ENCODE measurements at regions of chr3 and their contacts with region 1.

Region 1: DNA sequence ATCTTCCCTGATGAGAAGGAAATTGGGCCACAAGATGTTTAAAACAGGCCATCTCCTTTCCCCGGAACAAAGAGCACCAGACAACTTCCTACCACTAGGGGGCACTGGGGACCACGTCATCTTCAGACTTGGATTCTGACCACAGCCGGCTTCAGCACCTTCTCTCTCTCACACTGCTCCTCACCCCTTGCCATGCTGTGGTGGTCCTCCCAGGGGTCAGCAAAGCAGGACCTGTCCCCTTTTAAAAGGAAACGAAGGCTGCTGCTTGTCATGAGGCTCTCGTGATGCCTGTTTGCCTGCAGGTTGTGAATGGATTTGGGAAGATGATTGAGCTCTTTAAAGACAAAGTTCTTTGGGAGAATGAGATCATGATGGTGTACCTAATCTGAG is 16.2 kb downstream of the RFT1 start:
- DNase-seq: peak; percentile 47 to 93
- H3K4me3 ChIP-seq: no peak overlapping the region
- H3K27ac ChIP-seq: no peak overlapping the region
- H3K4me1 ChIP-seq: no peaks in the 10 kb centered on the region
- H3K27me3 ChIP-seq: no peaks in the 10 kb centered on the region
- CTCF ChIP-seq: peak; percentile 90 to 95 (median 90)
- EP300 ChIP-seq: no peak
- POLR2A ChIP-seq: no peak
- RAD21 ChIP-seq: peak; percentile 93

Region 2: DNA sequence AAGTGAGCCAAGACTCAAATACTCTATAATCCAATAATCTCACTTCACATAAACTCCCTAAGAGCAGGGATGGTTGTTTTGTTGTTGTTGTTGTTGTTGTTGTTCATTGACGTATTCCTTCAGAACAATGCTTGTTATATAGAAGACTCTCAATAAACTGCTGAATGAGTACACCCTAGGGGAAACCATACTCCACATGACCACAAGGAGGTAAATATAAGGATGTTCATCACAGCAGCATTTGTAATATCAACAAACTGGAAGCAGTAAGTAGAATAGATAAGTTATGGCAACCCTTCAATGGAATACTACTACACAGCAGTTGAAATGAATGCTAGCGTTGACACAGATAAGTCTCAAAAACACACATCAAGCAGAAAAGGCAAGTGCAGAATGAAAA is 154.2 kb before region 1 on chr3:
- CTCF ChIA-PET with region 1: no interaction called
- POLR2A ChIA-PET with region 1: no interaction called
- DNase-seq: no peak
- H3K4me3 ChIP-seq: no peak overlapping the region
- H3K27ac ChIP-seq: no peak overlapping the region
- H3K4me1 ChIP-seq: no peaks in the 10 kb centered on the region
- H3K27me3 ChIP-seq: no peaks in the 10 kb centered on the region
- CTCF ChIP-seq: peak in 1 of 3 experiments; percentile 5; a peak in 1 of 4 replicates
- EP300 ChIP-seq: no peak
- POLR2A ChIP-seq: no peak
- RAD21 ChIP-seq: no peak

Region 3: DNA sequence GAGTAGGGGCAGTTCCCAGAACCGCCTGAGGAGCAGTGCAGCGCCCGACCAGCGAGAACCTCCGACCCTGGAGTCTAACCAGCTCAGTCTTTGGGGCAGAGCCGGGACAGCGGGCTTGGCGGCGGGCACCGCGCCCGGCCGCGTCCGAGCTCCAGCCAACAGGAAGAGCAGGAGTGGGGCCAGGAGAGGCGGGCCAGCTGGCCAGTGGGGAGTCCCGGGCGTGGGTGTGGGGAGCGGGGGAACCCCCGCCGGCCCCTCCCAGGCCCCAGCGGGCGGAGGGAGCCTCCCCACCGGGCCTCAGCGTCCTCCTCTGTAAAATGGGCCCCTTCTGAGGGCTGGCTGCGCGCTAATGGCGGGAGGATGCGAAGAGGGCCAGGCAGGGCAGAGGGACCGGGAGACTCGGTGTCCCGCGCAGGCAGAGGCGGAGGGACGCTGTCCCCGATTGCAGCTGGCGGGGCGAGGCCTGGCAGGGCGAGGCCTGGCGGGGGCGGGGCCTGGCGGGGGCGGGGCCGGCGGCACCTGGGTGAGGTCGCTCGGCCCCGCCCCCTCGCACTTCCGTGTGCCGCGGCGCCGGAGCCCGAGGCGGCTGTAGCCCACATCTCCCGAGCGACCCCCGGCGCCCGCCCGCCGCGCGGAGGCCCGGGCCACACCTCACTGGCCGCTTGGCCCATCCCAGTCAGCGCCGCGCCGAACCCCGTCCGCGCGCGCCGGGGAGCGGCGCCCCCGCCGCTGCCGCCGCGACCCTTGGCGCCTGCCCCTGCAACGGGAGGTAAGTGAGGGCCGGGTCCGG is 46.8 kb after region 1 on chr3 and contains the start of gene PRKCD:
- CTCF ChIA-PET with region 1: interaction called, 16 read pairs
- POLR2A ChIA-PET with region 1: no interaction called
- DNase-seq: peak in 1 of 2 experiments; percentile 84
- H3K4me3 ChIP-seq: peak within 1 kb of the TSS; percentile 85 to 94 (median 92)
- H3K27ac ChIP-seq: no peak within 1 kb of the TSS
- H3K4me1 ChIP-seq: peaks cover 3 to 35% (median 21%) of the 10 kb centered on the region in 4 experiments
- H3K27me3 ChIP-seq: peaks cover 0 to 16% (median 6%) of the 10 kb centered on the region in 4 experiments; a peak in 3 of 7 replicates
- CTCF ChIP-seq: peak in 2 of 3 experiments; percentile 54 to 66; a peak in 3 of 4 replicates
- EP300 ChIP-seq: no peak
- POLR2A ChIP-seq: peak in 1 of 2 experiments; percentile 21; a peak in 1 of 3 replicates
- RAD21 ChIP-seq: peak; percentile 35
- total RNA-seq, gene PRKCD: 22.2 and 22.6 TPM in 2 replicates

Region 4: GRCh38 chr3:53180305-53181023 is 66.5 kb after region 1 on chr3:
- CTCF ChIA-PET with region 1: interaction called, 11 read pairs
- POLR2A ChIA-PET with region 1: no interaction called
- DNase-seq: no peak
- H3K4me3 ChIP-seq: no peak overlapping the region
- H3K27ac ChIP-seq: no peak overlapping the region
- H3K4me1 ChIP-seq: no peaks in the 10 kb centered on the region; a peak in 1 of 7 replicates
- H3K27me3 ChIP-seq: no peaks in the 10 kb centered on the region
- CTCF ChIP-seq: no peak
- EP300 ChIP-seq: no peak
- POLR2A ChIP-seq: no peak
- RAD21 ChIP-seq: no peak

Region 5: DNA sequence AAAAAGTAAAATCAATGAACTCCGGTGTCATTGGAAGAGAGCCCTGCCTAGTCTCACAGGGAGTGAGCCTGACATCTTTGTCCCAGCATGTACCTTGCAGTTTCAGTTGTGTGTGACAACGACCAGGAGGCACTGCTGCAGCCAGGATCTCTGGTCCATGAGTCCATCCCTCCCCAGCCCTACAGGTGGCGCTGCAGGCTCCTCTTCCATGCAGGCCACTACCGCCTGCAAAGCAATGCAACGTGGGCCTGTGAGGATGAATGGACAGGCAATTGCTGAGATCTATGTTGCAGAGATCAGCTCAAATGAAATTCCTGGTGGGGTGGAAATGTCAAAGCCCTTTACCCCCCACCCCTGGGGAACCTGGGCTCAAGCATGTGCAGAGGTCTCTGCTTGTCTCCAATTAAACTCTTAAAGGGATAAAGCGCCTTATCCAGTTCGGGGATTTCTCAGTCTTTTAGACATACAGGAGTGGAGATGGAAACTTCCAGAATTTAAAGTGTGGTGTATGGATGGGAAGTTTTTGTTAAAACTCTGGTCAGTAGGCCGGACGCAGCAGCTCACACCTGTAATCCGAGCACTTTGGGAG is 106.0 kb after region 1 on chr3:
- CTCF ChIA-PET with region 1: interaction called, 14 read pairs
- POLR2A ChIA-PET with region 1: interaction called, 7 read pairs
- DNase-seq: peak; percentile 78 to 97
- H3K4me3 ChIP-seq: no peak overlapping the region
- H3K27ac ChIP-seq: no peak overlapping the region
- H3K4me1 ChIP-seq: peaks cover 0 to 2% (median 0%) of the 10 kb centered on the region in 4 experiments; a peak in 1 of 7 replicates
- H3K27me3 ChIP-seq: no peaks in the 10 kb centered on the region
- CTCF ChIP-seq: peak in 2 of 3 experiments; percentile 97 to 98; a peak in 3 of 4 replicates
- EP300 ChIP-seq: no peak
- POLR2A ChIP-seq: peak in 1 of 2 experiments; percentile 27; a peak in 1 of 3 replicates
- RAD21 ChIP-seq: peak; percentile 85 to 89